Activated T-helper 1 cell treated with anti-CD3 and anti-CD28 coated beads, Interleukin-12 subunit alpha, Interleukin-12 subunit beta, Interleukin-2, Interleukin-4 antibody, amounts not matched to agents 30 ng/mL and 10 ng/mL and 1 ng/mL, durations not matched to agents 14 hours and 24 hours and 36 hours (primary cell): ENCODE measurements at regions of chr6 and their contacts with region 1.

Region 1: DNA sequence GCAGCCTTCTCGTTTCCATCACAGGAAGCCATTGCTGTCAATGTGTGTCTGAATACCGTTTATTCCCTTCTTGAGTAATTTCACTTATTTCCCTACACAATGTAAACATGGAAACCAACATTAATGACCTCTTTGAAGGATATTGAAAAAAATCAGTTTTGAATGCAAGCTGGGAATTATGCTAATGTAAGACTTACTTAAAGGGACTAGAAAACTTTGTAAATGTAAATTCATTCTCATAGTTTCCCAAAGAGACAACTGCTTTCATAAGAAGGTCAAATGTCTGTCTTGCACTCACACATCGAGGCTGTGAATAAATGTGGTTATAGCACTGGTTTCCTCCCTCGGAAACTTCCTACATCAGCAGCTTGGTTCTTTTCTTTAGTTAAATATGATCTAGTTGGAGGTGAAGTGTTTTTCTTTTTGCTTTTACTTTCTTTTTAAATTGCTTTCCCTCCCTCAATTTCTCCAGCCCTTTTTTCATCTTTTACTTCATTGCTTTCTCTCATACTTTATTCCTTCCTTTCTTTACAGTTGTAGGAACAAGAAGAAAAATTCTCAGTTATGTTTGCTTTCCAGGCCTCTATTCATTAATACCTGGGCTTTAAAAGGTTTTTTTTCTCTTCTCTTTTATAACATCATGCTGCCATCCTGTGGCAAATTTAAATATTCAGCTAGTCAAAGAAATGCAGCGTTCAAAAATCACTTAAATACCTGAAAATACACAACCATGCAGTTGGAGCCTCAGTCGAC is 108.3 kb downstream of the TNFAIP3 start:
- DNase-seq: peak; percentile 39
- H3K4me3 Mint-ChIP-seq: peak overlapping the region; percentile 69
- H3K27ac Mint-ChIP-seq: peak overlapping the region; percentile 91
- H3K4me1 Mint-ChIP-seq: peaks cover 71% of the 10 kb centered on the region
- H3K27me3 Mint-ChIP-seq: no peaks in the 10 kb centered on the region

Region 2: DNA sequence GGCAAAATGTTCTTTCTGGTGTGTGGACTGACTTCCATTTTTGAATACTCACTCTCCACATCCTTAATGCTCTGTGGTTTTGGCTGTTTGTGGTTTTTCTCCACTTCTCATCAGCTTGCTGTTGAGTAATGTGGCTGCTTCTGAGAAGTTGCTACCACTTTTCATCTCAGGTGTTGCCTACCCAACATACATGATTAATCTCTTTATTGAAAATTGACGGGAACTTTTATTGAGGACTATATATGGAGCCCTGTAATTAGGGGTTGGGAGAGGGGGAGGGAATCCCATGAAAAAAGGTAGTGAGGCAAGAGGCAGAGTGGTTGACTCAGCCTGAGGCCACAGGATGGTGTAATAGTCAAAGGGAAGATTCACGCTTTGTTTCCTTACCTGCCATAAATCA is 819.5 kb before region 1 on chr6:
- intact Hi-C with region 1: loop called (anchors 10 kb)
- DNase-seq: peak; percentile 63
- H3K4me3 Mint-ChIP-seq: peak overlapping the region; percentile 30
- H3K27ac Mint-ChIP-seq: peak overlapping the region; percentile 73
- H3K4me1 Mint-ChIP-seq: peaks cover 64% of the 10 kb centered on the region
- H3K27me3 Mint-ChIP-seq: peaks cover 9% of the 10 kb centered on the region

Region 3: DNA sequence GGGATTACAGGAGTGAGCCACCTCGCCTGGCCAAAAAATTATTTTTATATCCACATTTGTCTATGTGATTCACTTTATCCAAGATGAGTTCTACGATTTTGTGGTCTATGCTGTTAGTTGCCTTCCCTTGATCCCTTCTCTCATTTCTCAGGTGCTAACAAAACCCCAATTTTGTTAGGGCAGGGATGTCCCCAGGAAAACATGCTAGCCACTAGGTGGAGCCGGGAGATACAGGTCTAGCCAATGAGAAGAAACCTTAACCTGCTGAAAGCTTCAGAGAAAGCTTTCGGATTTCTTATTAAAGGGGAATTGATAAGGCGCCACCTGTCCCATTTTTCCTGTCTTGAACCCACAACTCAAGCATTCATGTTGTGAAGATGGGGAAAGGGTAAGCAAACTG is 313.8 kb before region 1 on chr6:
- intact Hi-C with region 1: loop called (anchors 1 kb)
- DNase-seq: no peak
- H3K4me3 Mint-ChIP-seq: no peak overlapping the region
- H3K27ac Mint-ChIP-seq: no peak overlapping the region
- H3K4me1 Mint-ChIP-seq: peaks cover 58% of the 10 kb centered on the region
- H3K27me3 Mint-ChIP-seq: peaks cover 2% of the 10 kb centered on the region

Region 4: DNA sequence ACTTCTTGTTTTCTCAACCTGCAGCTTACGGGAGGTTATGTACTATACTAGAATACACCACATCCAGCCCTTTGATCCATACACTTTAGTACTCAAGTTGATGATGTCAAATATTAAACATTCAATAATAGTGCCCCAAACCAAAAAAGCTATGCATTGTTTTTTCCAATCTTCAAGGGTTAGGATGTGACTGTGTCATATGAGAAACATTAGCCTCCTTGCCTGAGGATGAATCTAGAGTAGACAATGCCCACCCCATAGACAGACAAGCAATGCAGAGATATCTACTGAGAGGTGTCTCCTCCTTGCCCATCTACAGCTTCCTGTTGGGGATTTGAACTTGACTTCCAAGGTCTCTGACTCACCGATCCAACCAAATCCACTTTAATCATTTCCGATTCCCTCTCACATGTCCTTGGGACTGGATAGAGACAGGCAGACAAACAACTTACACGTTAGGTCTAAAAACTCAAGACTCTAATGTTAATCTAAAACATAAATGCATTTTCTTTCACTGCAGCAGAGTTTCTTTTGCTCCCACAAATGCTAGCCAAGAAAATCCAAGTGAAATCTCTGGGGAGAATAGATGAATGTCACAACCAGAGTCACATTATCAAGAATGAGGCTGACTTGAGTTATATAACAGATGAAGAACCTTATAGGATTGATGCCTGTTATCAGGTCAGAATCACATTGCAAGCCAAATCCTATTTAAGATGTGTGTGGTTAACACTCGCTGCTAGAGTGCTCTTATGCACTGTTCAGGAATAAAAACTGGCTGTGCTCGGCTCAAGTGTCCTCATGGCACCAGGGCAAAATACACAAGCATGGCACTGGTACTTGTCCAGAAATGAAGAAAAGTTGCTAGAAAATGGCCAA is 183.8 kb before region 1 on chr6:
- intact Hi-C with region 1: loop called (anchors 5 kb)
- DNase-seq: no peak
- H3K4me3 Mint-ChIP-seq: peak overlapping the region; percentile 59
- H3K27ac Mint-ChIP-seq: peak overlapping the region; percentile 87
- H3K4me1 Mint-ChIP-seq: peaks cover 76% of the 10 kb centered on the region
- H3K27me3 Mint-ChIP-seq: no peaks in the 10 kb centered on the region

Region 5: DNA sequence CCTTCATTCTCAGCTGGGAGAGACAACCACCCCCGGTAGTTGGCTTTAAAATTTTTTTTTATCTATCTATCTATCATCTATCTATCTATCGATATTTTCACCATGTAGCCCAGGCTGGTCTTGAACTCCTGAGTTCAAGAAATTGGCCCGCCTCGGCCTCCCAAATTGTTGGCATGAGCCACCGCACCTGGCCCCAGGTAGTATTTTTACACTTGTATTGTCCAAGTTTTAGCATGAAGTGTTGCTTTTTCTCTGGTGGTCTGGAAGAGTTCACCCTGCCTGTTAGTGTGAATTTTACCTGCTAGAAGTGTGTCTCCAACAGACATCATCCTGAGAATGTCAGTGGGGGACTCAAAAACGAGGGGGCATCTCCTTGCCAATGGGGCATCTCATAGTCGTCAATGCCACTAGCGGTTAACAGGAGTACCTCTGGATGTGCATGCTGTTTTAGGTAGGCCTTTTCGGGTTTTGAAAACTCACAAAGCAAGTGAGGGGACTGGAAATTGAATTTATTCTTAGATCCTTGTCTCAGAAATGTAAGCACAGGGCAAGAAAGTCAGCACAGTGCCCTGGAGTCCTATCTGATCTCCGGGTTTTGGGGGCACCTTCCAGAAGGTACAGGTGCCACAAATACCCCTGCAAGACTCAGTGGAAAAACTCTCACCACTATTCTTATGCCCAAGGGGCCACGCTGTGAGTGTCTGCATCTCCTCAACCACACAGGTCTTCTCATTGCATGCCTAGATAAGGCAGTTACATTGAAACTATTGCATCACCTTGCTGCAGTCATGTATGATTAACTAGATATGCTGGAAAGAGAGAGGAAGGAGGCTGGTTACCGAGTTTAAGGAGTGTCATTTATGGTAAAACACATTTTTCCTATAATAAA is 71.2 kb before region 1 on chr6:
- intact Hi-C with region 1: loop called (anchors 1 kb)
- DNase-seq: no peak
- H3K4me3 Mint-ChIP-seq: peak overlapping the region; percentile 19
- H3K27ac Mint-ChIP-seq: peak overlapping the region; percentile 97
- H3K4me1 Mint-ChIP-seq: peaks cover 59% of the 10 kb centered on the region
- H3K27me3 Mint-ChIP-seq: no peaks in the 10 kb centered on the region

Region 6: DNA sequence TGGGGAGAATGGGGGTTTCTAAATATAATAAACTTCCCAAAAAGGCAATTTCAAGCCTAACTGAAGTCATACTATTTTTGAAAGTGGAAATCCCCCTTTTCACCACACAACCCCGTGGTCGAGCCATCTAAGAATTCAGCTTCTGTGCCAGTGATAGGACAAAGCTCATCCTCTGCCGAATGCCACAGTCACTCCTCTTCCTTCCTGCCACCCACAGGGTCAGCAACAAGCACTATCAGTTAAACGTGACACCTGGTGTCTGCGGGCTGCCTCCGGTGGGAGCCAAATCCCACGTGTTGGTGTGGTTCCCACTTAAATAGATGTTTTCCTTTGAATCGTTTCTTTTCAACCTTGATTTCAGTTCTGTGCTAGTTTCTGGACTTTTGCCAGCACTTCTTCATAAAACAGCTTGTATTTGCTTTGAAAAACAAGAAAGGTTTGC is 47.6 kb before region 1 on chr6:
- intact Hi-C with region 1: loop called (anchors 1 kb)
- DNase-seq: peak; percentile 80
- H3K4me3 Mint-ChIP-seq: peak overlapping the region; percentile 52
- H3K27ac Mint-ChIP-seq: peak overlapping the region; percentile 93
- H3K4me1 Mint-ChIP-seq: peaks cover 82% of the 10 kb centered on the region
- H3K27me3 Mint-ChIP-seq: no peaks in the 10 kb centered on the region

Region 7: DNA sequence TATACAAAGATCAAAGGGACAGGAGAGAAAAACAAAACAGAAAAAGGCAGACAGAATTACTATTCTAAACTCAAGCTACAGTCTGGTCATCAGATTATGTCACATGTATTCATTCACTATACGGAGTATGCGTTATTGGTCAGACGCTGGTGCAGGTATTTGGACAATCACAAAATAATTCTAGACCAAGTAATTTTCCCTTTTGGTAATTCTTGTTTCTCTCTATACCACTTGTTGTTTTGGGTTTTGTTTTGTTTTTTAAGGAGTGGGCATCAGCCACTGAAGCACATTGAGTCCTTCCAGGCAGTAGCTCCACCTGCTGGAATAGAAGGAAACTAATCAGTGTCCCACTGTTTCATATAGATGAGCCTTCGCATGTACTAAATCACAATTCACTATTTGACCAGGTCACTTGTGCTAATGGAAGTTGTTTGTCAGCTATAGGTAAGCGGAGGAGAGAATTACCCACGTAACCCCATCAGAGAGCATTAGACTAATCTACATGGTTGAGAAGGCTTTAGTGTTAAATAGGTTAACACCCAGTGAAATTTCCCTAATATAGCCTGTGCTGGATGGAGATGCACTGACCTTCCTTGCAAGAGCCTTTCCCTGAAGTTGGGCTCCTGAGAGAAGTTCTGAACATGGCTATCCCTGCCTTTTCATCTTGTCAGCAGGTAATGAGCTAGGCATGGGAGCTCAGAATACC is 30.4 kb before region 1 on chr6:
- intact Hi-C with region 1: loop called (anchors 1 kb)
- DNase-seq: no peak
- H3K4me3 Mint-ChIP-seq: no peak overlapping the region
- H3K27ac Mint-ChIP-seq: peak overlapping the region; percentile 15
- H3K4me1 Mint-ChIP-seq: peaks cover 86% of the 10 kb centered on the region
- H3K27me3 Mint-ChIP-seq: no peaks in the 10 kb centered on the region

Region 8: DNA sequence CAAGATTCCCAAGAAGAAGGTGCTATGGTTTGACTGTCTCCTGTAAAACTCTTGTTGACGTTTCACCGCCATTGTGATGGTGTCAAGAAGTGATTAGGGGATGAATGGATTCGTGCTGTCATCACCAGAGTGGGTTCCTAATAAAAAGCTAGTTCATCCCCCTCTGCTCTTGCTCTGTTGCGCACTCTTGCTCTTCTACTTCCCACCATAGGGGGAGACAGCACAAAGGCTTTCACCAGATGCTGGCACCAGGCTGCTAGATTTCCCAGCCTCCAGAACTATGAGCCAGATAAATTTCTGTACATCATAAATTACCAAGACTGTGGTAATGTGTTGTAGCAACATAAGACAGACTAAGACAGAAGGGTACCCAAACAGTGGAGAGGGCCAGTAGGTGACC is 776.7 kb after region 1 on chr6:
- intact Hi-C with region 1: no loop called
- DNase-seq: no peak
- H3K4me3 Mint-ChIP-seq: no peak overlapping the region
- H3K27ac Mint-ChIP-seq: no peak overlapping the region
- H3K4me1 Mint-ChIP-seq: no peaks in the 10 kb centered on the region
- H3K27me3 Mint-ChIP-seq: peaks cover 3% of the 10 kb centered on the region